Heart right ventricle (tissue), 16 donors: ENCODE measurements at regions of chr14 and their contacts with region 1.

Region 1: DNA sequence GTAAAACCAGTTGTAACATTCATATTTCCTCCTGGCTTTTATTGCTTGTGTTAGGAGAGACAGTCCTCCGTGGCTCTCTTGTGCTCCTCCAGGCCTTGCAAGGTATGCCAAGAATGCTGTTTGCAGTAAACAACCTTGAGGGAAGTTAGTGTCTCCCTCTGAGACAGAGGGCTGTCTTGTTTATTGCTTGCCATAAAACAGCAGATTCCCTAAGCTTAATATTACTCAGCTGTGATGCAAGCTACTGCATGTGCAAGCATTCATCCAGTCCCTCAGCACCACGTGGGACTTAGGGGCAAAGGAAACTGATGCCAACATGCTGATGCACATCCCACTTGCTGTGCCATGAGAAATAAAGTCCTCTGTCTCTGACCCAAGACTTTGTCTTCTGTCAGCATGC is 6.6 kb downstream of the POMT2 start:
- DNase-seq: no peak
- ATAC-seq: no peak
- H3K4me3 ChIP-seq: no peak overlapping the region
- H3K27ac ChIP-seq: no peak overlapping the region
- H3K4me1 ChIP-seq: peaks cover 0 to 54% (median 20%) of the 10 kb centered on the region in 9 donors
- H3K27me3 ChIP-seq: no peaks in the 10 kb centered on the region
- CTCF ChIP-seq: no peak

Region 2: DNA sequence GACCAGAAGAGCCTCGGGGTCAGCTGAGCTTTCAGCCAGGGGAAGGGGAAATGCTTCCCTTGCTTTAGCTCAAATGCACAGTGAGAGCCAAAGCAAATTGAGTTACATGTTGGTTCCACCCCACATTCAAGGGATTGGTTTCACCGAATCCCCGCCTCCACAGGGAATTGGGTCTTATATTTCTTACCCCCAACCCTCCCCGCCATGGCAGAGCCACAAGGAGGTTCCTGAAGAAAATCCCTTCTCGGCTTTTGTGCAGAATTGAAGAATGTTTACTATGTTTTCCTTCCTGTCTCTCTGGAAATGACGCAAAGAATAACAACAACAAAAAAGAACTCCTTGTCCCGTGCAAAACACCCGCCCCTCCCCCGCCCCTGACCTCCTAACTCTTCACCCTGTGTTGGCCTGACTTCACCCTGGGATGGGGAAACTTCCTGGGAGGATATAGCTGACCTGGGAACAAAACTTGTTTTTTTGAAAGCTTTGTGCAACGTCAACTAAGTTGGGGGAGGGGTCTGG is 237.9 kb before region 1 on chr14:
- intact Hi-C with region 1: loop called in 1 of 10 experiments (anchors 10 kb)
- DNase-seq: peak; percentile 81 to 89
- ATAC-seq: peak; percentile 90 to 96 (median 93)
- H3K4me3 ChIP-seq: peak overlapping the region in 8 of 10 donors; percentile 24 to 42 (median 30)
- H3K27ac ChIP-seq: peak overlapping the region; percentile 79 to 95 (median 92)
- H3K4me1 ChIP-seq: peaks cover 9 to 41% (median 28%) of the 10 kb centered on the region in 9 donors
- H3K27me3 ChIP-seq: no peaks in the 10 kb centered on the region
- CTCF ChIP-seq: no peak

Region 3: DNA sequence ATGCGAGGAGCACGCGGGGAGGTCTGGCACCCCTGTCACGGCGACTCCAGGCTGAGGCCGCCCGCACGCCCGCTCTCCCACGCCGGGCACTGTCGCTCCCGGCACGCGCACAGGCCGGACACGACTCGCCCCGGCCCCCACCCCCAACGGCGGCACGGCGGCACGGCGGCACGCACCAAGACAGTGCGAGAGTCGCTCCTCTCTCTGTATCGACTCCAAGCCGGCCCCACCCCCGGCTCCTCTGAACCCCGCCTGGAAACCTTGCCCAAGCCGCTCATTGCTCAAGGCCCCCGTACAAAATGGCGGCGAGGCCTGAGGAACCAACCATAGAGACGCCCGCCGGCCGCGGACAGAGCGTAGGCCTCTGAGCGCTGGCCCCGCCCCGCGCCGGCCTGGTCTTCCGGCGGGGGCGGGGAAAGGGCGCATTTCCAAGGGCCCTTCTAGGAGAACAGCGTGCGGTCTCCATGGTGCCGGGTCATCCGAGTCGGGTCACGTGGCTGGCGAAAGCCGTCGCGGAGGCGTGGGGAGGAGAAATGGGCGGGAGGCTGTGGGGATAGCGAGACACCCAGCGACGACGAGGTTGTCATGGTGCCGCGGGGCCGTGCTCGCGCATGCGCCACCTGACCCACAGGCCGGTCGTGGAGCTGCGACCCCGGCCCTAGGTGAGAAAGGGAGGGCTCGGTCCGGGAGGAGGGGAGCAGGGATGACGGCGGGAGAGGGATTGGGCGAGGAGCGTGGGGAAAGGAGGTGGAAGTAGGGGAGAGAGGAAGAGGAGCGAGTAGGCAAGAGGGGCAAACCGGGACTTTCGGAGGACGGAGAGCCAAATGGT is 216.1 kb before region 1 on chr14 and contains the start of gene CIPC:
- intact Hi-C with region 1: loop called in 1 of 10 experiments (anchors 10 kb)
- DNase-seq: peak; percentile 99 to 100
- ATAC-seq: peak; percentile 94 to 98 (median 96)
- H3K4me3 ChIP-seq: peak within 1 kb of the TSS; percentile 53 to 86 (median 73)
- H3K27ac ChIP-seq: peak within 1 kb of the TSS; percentile 94 to 99 (median 98)
- H3K4me1 ChIP-seq: peaks cover 0 to 62% (median 49%) of the 10 kb centered on the region in 9 donors
- H3K27me3 ChIP-seq: no peaks in the 10 kb centered on the region
- CTCF ChIP-seq: no peak
- total RNA-seq, gene CIPC: 51.4 to 93.8 (median 64.2) TPM

Region 4: DNA sequence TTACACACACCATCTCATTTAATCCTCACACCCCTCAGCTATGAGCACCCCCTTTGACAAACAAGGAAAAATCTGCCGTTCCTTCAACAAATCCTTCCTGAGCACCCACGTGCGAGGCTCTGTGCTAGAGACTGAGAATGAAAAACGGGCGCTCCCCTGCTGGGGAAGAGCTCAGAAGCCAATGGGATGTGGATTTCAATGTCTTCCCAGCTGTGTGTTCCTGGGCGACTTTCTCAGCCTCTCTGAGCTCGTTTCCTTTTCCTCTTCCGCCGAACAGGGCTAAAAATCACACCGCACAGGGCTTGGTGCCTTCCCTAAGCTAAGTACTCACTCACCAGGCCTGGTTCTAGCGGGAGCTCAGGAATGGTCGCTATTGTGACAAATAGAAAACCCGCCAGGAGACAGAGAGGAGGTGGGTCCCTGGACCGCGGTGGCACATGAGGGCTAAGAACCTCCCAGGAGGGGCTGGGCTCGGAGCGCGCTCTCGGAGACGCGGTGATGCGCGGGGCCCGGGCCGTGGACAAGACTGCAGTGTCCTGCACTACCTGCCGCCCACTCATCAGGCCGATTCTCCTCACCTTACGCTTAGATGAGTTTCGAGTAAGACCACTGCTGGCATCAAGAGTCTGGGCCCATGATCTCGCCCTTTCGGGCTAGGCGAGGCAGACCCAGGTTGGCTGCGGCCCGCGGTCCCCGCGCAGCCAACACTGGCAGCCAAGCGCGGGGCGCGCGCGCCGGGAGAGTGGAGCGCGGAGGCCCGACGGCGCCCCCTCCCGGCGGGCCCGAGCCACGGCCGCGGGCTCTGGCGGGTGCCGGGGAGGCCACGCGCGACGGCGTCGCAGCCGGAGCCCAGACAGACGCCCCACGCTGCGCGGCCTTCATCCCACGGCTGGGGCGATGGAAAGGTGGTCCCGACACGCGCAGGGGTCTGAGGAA is 189.4 kb before region 1 on chr14:
- intact Hi-C with region 1: loop called in 1 of 10 experiments (anchors 10 kb)
- DNase-seq: peak in 1 of 2 donors; percentile 63
- ATAC-seq: peak; percentile 57 to 84 (median 70)
- H3K4me3 ChIP-seq: peak overlapping the region; percentile 25 to 62 (median 56)
- H3K27ac ChIP-seq: peak overlapping the region in 2 of 10 donors; percentile 36 to 46
- H3K4me1 ChIP-seq: peaks cover 14 to 54% (median 36%) of the 10 kb centered on the region in 9 donors
- H3K27me3 ChIP-seq: peaks cover 0 to 30% (median 7%) of the 10 kb centered on the region in 7 donors
- CTCF ChIP-seq: peak; percentile 30 to 83 (median 71)

Region 5: GRCh38 chr14:77139540-77140358 is 174.3 kb before region 1 on chr14:
- intact Hi-C with region 1: loop called in 1 of 10 experiments (anchors 5 kb)
- DNase-seq: no peak
- ATAC-seq: peak in 3 of 8 donors; percentile 29 to 40 (median 32)
- H3K4me3 ChIP-seq: peak overlapping the region in 1 of 10 donors; percentile 4
- H3K27ac ChIP-seq: no peak overlapping the region
- H3K4me1 ChIP-seq: peaks cover 7 to 29% (median 26%) of the 10 kb centered on the region in 9 donors
- H3K27me3 ChIP-seq: peaks cover 25 to 100% (median 92%) of the 10 kb centered on the region in 7 donors
- CTCF ChIP-seq: peak in 7 of 9 donors; percentile 28 to 55 (median 46)

Region 6: GRCh38 chr14:77151918-77152588 is 162.0 kb before region 1 on chr14:
- intact Hi-C with region 1: loop called (anchors 1 to 10 kb)
- DNase-seq: no peak
- ATAC-seq: peak in 4 of 8 donors; percentile 25 to 57 (median 45)
- H3K4me3 ChIP-seq: no peak overlapping the region
- H3K27ac ChIP-seq: no peak overlapping the region
- H3K4me1 ChIP-seq: peaks cover 0 to 14% (median 0%) of the 10 kb centered on the region in 9 donors
- H3K27me3 ChIP-seq: peaks cover 0 to 45% (median 32%) of the 10 kb centered on the region in 7 donors
- CTCF ChIP-seq: peak in 5 of 9 donors; percentile 26 to 42 (median 31)

Region 7: GRCh38 chr14:77245820-77246219 is 68.2 kb before region 1 on chr14:
- intact Hi-C with region 1: no loop called
- DNase-seq: no peak
- ATAC-seq: no peak
- H3K4me3 ChIP-seq: no peak overlapping the region
- H3K27ac ChIP-seq: no peak overlapping the region
- H3K4me1 ChIP-seq: no peaks in the 10 kb centered on the region
- H3K27me3 ChIP-seq: no peaks in the 10 kb centered on the region
- CTCF ChIP-seq: no peak

Region 8: DNA sequence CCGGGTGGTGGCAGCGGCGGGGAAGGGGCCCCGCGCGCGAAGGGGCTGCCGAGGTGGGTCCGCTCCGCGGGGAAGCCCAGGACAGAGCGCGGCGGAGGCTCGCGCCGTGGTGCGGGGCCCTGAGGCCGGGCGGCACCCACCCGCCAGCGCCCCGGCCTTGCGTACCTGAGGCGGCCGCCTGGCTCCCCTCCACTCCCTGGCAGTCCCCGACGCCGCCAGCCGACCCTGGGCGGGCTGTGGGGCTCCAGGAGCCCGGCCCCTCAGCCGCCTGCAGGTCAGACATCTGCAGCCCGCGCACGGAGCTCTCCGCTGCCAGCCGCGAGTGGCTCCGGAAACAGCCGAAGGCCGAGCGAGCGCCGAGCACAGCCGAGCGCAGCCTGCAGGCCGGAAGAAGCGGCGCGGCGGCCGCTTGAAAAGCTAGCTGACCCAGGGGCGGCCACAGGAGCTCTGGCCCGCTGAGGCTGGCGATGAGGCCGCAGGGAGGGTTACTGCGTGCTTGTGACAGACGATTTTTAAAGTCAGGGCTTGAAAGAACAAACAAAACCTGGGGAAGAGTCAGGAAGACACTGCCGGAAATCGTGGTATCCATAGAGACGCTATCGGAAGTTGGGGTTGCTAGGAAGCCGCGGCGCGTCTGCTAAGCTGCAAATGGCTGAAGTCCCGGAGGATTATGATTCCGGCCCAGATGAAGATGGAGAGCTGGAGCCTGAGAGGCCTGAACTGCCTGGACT is 62.9 kb after region 1 on chr14 and contains the starts of genes SAMD15 and TMED8:
- intact Hi-C with region 1: no loop called
- DNase-seq: peak; percentile 84 to 88
- ATAC-seq: peak; percentile 97 to 99 (median 98)
- H3K4me3 ChIP-seq: peak within 1 kb of the TSS; percentile 56 to 94 (median 86)
- H3K27ac ChIP-seq: peak within 1 kb of the TSS; percentile 16 to 92 (median 84)
- H3K4me1 ChIP-seq: peaks cover 0 to 28% (median 18%) of the 10 kb centered on the region in 9 donors
- H3K27me3 ChIP-seq: no peaks in the 10 kb centered on the region
- CTCF ChIP-seq: peak in 5 of 9 donors; percentile 35 to 60 (median 46)
- total RNA-seq, gene SAMD15: 0.15 to 0.30 (median 0.21) TPM in 9 of 10 donors, not detected in the other
- total RNA-seq, gene TMED8: 4.4 to 8.7 (median 7.1) TPM